PC-3 (cell line): ENCODE measurements at regions of chr1 and their contacts with region 1.

Region 1: DNA sequence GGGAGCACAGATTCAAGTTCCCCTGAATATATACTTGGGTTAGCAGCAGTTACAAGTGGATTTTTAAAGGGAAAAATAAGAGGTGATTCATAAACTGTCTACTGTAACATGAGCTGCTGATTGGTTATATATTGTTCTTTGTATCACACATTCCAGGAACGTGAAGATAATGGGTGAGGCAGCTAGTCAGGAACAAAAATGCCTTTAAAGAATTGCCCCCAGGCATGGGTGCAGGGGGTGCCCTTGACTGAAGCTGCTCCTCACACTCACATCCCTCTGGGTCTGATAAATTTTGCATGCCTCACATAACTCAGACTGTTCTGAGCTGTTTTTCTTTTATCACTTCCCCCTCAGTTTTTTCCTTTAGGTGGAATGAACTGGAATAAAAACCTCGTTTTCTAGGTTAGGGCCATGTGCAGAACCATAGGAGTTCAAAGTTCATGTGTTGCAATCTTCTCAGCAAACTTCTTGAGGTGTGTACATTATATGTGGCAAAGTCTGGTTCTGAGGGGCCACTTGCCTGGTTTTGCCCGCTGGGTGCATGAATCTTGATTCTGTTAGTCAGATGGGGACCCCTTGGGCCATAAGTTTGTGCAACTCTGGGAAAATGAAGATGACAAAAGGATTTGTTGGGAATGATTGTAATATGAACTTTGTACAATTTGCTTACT is 21.1 kb downstream of the TBX19 start:
- DNase-seq: peak; percentile 99
- ATAC-seq: peak; percentile 93
- H3K4me3 ChIP-seq: 0 out of 2 replicates have a peak overlapping the region, but pooled peaks have one; percentile 8
- H3K27ac ChIP-seq: peak overlapping the region; percentile 76
- H3K4me1 ChIP-seq: peaks cover 38% of the 10 kb centered on the region
- H3K27me3 ChIP-seq: no peaks in the 10 kb centered on the region
- CTCF ChIP-seq: no peak

Region 2: DNA sequence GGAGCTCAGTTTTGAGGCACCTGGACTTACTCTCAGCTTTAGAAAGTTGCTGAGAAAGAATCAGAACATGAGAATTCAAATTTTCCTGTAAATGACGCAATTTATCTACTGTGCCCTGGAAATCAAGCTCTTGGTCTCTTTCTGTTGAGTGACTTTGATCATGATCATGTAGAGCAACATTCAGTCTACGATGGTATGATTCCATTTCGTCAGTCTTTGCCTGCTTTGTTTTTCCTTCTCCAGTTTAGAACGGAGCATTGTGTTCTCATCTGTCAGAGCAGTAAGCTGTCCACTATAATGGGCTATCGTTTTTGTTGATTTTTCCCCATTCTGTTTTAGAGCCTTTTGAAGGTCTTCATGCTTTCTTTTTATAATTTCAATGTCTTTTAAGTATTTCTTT is 55.3 kb before region 1 on chr1:
- CTCF ChIA-PET with region 1: no interaction called
- POLR2A ChIA-PET with region 1: interaction called, 12 read pairs
- intact Hi-C with region 1: no loop called
- DNase-seq: no peak
- ATAC-seq: no peak
- H3K4me3 ChIP-seq: no peak overlapping the region
- H3K27ac ChIP-seq: no peak overlapping the region
- H3K4me1 ChIP-seq: no peaks in the 10 kb centered on the region
- H3K27me3 ChIP-seq: no peaks in the 10 kb centered on the region
- CTCF ChIP-seq: no peak

Region 3: GRCh38 chr1:168373869-168374268 is 72.1 kb after region 1 on chr1:
- CTCF ChIA-PET with region 1: no interaction called
- POLR2A ChIA-PET with region 1: no interaction called
- intact Hi-C with region 1: no loop called
- DNase-seq: peak; percentile 23
- ATAC-seq: no peak; the same call in 1 of the 2 replicates
- H3K4me3 ChIP-seq: no peak overlapping the region
- H3K27ac ChIP-seq: no peak overlapping the region
- H3K4me1 ChIP-seq: peaks cover 2% of the 10 kb centered on the region
- H3K27me3 ChIP-seq: no peaks in the 10 kb centered on the region
- CTCF ChIP-seq: no peak

Region 4: DNA sequence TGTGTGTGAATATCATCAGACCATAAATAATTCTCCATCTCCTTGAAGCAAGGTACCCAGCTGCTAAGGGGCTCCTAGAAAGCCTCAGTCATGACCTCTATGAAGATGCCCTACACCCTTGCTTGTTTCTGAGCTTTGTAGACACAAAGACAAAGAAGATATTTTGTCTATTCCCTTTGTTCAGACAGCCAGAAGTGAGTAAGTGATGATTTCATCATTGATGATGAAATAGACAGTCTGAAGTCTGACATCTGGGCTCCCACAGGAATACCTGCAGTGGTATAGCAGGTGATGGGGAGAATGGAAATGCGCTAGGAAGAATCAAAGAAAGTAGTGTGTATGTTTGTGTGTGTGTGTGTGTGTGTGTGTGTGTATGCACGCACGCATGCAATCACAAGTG is 509.4 kb after region 1 on chr1:
- CTCF ChIA-PET with region 1: no interaction called
- POLR2A ChIA-PET with region 1: no interaction called
- intact Hi-C with region 1: no loop called
- DNase-seq: no peak
- ATAC-seq: no peak
- H3K4me3 ChIP-seq: no peak overlapping the region
- H3K27ac ChIP-seq: no peak overlapping the region
- H3K4me1 ChIP-seq: no peaks in the 10 kb centered on the region
- H3K27me3 ChIP-seq: no peaks in the 10 kb centered on the region
- CTCF ChIP-seq: no peak